ENCODE measurements at regions of chr11 and their contacts with region 1.

Region 1: GRCh38 chr11:128859563-128860441 is 7.3 kb downstream of the KCNJ1 start:
- DNase-seq: peak; percentile 87
- ATAC-seq: peak; percentile 98
- H3K4me3 Mint-ChIP-seq: no peak overlapping the region
- H3K27ac Mint-ChIP-seq: no peak overlapping the region
- H3K4me1 Mint-ChIP-seq: no peaks in the 10 kb centered on the region
- H3K27me3 Mint-ChIP-seq: peaks cover 1% of the 10 kb centered on the region
- CTCF ChIP-seq: peak; percentile 98

Region 2: GRCh38 chr11:128039140-128040021 is 820.4 kb before region 1 on chr11:
- CTCF ChIA-PET with region 1: no interaction called
- POLR2A ChIA-PET with region 1: no interaction called
- intact Hi-C with region 1: loop called (anchors 10 kb)
- DNase-seq: peak; percentile 91
- ATAC-seq: peak; percentile 90
- H3K4me3 Mint-ChIP-seq: peak overlapping the region; percentile 58
- H3K27ac Mint-ChIP-seq: peak overlapping the region; percentile 93
- H3K4me1 Mint-ChIP-seq: peaks cover 42% of the 10 kb centered on the region
- H3K27me3 Mint-ChIP-seq: no peaks in the 10 kb centered on the region
- CTCF ChIP-seq: peak; percentile 45

Region 3: GRCh38 chr11:128848815-128849455 is 10.9 kb before region 1 on chr11:
- CTCF ChIA-PET with region 1: interaction called, 40 read pairs
- POLR2A ChIA-PET with region 1: no interaction called
- intact Hi-C with region 1: no loop called
- DNase-seq: peak; percentile 84
- ATAC-seq: peak; percentile 90
- H3K4me3 Mint-ChIP-seq: no peak overlapping the region
- H3K27ac Mint-ChIP-seq: no peak overlapping the region
- H3K4me1 Mint-ChIP-seq: peaks cover 21% of the 10 kb centered on the region
- H3K27me3 Mint-ChIP-seq: no peaks in the 10 kb centered on the region
- CTCF ChIP-seq: peak; percentile 81